Common myeloid progenitor, CD34-positive (primary cell): ENCODE measurements at regions of chr2 and their contacts with region 1.

Region 1: GRCh38 chr2:171347591-171348032 is 86.2 kb downstream of the METTL8 start:
- DNase-seq: peak in 2 of 3 donors; percentile 49 to 65
- H3K4me3 ChIP-seq: no peak overlapping the region
- H3K27ac ChIP-seq: no peak overlapping the region
- H3K4me1 ChIP-seq: peaks cover 8 to 25% (median 20%) of the 10 kb centered on the region in 4 experiments
- H3K27me3 ChIP-seq: no peaks in the 10 kb centered on the region

Region 2: GRCh38 chr2:171334171-171334570 is 13.4 kb before region 1 on chr2:
- CTCF ChIA-PET with region 1: no interaction called
- POLR2A ChIA-PET with region 1: no interaction called
- DNase-seq: no peak
- H3K4me3 ChIP-seq: no peak overlapping the region
- H3K27ac ChIP-seq: no peak overlapping the region
- H3K4me1 ChIP-seq: peaks cover 0 to 3% (median 0%) of the 10 kb centered on the region in 4 experiments
- H3K27me3 ChIP-seq: no peaks in the 10 kb centered on the region

Region 3: GRCh38 chr2:171416009-171416926 is 68.7 kb after region 1 on chr2:
- CTCF ChIA-PET with region 1: interaction called, 11 read pairs
- POLR2A ChIA-PET with region 1: no interaction called
- DNase-seq: peak; percentile 92 to 95 (median 95)
- H3K4me3 ChIP-seq: peak overlapping the region in 1 of 7 experiments; percentile 17
- H3K27ac ChIP-seq: no peak overlapping the region
- H3K4me1 ChIP-seq: peaks cover 0 to 9% (median 3%) of the 10 kb centered on the region in 4 experiments
- H3K27me3 ChIP-seq: no peaks in the 10 kb centered on the region

Region 4: DNA sequence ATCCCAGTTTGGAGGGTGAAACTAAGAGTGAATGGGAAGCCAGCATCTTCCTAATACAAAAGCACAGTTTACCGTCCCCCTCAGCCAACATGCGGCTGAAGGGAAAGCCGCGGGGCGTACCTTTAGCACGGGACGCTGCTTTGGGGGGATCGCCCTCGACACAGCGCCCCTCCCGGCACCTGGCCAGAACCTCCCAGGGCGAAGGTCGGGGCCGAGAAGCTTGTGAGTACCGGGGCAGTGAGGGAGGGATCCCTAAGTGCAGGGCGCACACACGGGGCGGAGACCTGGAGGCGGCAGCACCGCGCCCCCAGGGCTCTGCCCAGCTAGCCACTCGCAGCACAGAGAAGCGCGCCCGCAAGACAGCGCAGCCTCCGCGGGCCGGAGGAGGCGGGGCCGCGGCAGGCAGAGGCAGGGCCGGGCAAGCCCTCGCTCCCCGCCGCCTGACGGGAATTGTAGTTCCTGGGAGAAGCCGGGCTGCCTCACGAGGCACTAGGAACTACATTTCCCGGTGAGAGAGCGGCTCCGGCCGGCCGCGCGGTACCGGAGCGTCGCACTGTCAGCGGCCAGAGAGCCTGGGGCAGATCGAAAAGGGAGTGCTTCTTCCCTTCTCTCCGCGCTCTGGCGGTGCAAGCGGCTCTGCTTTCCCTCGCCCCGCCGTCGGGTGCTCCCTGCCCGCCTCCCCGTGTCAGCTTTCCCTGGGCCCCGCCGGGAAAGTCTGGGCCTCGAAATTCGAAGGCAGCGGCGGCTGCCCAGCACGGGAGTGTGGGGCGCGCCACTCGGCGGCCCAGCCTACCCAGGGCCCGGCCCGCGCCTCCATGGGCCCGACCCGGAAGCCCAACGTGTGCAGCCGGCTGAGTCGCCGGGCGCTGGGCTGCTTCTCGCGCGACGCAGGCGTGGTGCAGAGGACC is 86.4 kb after region 1 on chr2 and contains the starts of genes DCAF17 and METTL8:
- CTCF ChIA-PET with region 1: no interaction called
- POLR2A ChIA-PET with region 1: no interaction called
- DNase-seq: peak; percentile 97 to 99 (median 99)
- H3K4me3 ChIP-seq: peak within 1 kb of the TSS; percentile 77 to 91 (median 83)
- H3K27ac ChIP-seq: peak within 1 kb of the TSS; percentile 70 to 89
- H3K4me1 ChIP-seq: peaks cover 8 to 25% (median 15%) of the 10 kb centered on the region in 4 experiments
- H3K27me3 ChIP-seq: no peaks in the 10 kb centered on the region